PC-3 (cell line): ENCODE measurements at regions of chr10 and their contacts with region 1.

Region 1: DNA sequence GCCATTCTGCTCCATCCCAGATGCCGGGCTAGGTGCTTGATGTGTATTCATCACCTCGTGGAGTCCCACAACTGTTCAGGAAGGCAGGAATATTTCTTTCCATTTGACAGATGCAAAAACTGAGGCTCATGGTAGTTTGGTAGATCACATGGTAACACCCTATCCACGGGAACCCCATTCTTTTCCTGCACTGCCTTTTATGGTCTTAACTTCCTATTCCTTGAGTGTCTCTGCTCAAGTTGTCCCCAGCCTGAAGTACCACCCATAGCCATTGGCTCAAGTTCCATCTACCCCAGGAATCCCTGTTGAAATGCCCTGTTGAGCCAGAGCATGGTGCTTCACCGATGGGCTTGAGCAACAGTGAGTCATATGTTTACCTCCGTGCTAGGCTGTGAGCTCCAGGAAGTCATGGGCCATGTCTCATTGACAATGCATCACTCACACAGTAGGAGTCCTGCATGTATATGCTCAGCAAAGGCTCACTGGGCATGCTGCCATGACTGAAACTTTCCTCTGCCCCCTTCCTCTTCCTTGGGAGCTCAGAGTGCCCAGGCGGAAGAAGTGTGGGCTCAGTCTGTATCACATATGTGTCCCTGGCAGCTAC is 71.7 kb upstream of the ADAM12 start:
- DNase-seq: peak; percentile 94
- ATAC-seq: peak; percentile 99
- H3K4me3 ChIP-seq: no peak overlapping the region
- H3K27ac ChIP-seq: peak overlapping the region; percentile 92
- H3K4me1 ChIP-seq: peaks cover 26% of the 10 kb centered on the region
- H3K27me3 ChIP-seq: no peaks in the 10 kb centered on the region
- CTCF ChIP-seq: no peak

Region 2: DNA sequence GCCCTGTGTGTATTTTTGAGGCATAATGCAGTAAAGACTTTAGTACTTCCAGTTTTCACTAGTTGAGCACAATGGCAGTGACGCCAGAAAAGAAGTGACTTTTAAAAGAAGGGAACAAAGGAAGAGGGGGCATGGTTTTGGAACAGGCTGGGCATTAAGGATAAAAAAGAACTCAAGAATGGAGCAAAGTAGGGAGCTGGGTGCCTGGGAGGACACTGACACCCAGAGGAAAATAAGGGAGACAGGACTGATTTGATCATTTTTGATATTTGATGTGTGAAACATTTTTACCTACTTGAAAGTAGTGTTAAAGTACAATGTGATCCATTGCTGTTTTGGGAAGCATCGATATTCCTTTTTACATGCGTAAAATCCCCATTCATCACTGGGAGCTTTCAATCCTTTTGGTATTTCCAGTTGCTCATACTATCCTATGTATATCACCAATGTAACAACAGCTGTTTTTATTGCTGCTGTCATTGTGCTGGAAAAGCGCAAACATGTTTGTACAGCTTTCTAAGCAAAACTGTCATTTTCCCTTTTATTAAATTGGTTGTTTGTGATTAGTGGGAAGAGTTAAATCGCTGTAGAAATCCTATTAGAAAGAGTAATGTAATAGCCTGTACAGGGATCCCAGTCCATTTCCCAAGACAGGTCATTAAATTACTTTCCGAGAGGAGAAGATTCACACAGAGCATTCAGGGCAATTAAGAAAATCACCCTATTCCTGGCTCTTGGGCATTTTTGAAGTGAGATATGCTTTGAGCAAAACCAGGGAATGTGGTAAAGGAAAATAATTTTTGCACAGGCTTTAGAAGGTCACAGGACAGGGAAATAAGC is 156.9 kb before region 1 on chr10:
- CTCF ChIA-PET with region 1: no interaction called
- POLR2A ChIA-PET with region 1: no interaction called
- intact Hi-C with region 1: no loop called
- DNase-seq: peak; percentile 4
- ATAC-seq: peak; percentile 38; the same call in 1 of the 2 replicates
- H3K4me3 ChIP-seq: no peak overlapping the region
- H3K27ac ChIP-seq: no peak overlapping the region
- H3K4me1 ChIP-seq: no peaks in the 10 kb centered on the region
- H3K27me3 ChIP-seq: no peaks in the 10 kb centered on the region
- CTCF ChIP-seq: peak; percentile 41

Region 3: DNA sequence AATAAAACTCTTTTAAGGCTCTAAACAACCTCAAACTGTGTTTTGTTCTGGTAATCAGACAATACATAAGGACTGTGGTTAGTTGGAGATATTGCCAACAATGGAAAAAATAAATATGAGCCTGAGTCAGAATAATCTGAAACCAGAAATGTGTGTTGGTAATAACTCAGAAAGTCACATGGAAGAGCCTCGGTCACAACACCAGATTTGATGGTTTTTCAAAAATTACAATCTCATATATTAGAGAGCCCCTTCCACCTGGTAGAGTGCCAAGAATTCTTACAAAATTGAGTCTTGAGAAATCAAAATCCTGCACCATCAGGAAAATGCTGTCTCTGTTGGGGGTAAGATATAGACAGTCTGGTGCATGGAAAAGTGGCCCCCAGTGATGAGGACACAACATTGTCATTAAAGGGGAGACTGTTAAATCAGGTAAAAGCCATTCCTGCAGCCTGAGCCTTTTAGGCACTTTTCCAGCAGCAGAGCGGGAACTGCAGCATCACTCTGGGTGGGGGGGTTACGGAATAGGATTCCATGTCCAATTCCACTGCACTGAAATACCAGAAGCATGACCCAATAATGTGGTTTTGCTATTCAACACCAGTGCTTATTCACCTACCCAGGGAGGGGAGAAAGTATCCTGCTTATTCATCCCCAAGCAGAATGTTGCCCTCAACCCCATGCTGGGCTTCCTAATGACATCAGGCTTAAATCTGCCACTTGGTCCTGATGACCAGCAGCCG is 62.2 kb before region 1 on chr10:
- CTCF ChIA-PET with region 1: no interaction called
- POLR2A ChIA-PET with region 1: no interaction called
- intact Hi-C with region 1: loop called (anchors 5 kb)
- DNase-seq: peak; percentile 92
- ATAC-seq: peak; percentile 98
- H3K4me3 ChIP-seq: peak overlapping the region; percentile 36; the same call in 1 of the 2 replicates
- H3K27ac ChIP-seq: peak overlapping the region; percentile 96
- H3K4me1 ChIP-seq: peaks cover 25% of the 10 kb centered on the region
- H3K27me3 ChIP-seq: no peaks in the 10 kb centered on the region
- CTCF ChIP-seq: no peak